ENCODE measurements at regions of chr3 and their contacts with region 1.

Region 1: DNA sequence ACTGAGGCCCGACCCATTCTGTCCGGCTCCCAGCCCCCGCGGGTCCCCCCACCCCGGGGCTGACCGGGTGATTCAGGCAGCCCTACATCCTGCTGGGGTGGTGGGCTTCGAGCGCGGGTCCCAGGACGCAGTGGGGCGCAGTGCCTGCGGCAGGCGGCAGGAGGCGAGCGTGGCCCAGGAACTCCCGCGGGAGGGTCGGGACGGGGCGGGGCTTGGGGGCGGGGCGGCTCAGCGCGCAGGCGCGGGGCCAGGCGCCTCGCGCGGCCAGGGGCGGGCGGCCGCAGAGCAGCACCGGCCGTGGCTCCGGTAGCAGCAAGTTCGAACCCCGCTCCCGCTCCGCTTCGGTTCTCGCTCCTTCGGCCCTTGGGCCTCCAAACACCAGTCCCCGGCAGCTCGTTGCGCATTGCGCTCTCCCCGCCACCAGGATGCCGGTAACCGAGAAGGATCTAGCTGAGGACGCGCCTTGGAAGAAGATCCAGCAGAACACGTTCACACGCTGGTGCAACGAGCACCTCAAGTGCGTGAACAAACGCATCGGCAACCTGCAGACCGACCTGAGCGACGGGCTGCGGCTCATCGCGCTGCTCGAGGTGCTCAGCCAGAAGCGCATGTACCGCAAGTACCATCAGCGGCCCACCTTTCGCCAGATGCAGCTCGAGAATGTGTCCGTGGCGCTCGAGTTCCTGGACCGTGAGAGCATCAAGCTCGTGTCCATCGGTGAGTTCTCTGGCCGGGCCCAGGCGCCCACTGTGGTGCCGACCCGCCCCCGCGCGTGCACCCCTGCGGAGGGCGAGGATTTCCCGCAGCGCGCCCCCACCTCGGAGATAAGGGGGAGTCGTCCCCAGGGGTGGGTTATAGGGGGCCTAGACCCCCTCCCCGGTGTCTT is at the start of gene FLNB:
- DNase-seq: peak; percentile 73
- H3K4me3 Mint-ChIP-seq: peak within 1 kb of the TSS; percentile 80
- H3K27ac Mint-ChIP-seq: peak within 1 kb of the TSS; percentile 78
- H3K4me1 Mint-ChIP-seq: peaks cover 36% of the 10 kb centered on the region
- H3K27me3 Mint-ChIP-seq: no peaks in the 10 kb centered on the region
- total RNA-seq, gene FLNB: 34.8 and 35.6 TPM in 2 replicates

Region 2: GRCh38 chr3:57983734-57984518 is 24.5 kb before region 1 on chr3:
- intact Hi-C with region 1: loop called (anchors 2 kb)
- DNase-seq: peak; percentile 64
- H3K4me3 Mint-ChIP-seq: peak overlapping the region; percentile 10
- H3K27ac Mint-ChIP-seq: peak overlapping the region; percentile 91
- H3K4me1 Mint-ChIP-seq: peaks cover 19% of the 10 kb centered on the region
- H3K27me3 Mint-ChIP-seq: no peaks in the 10 kb centered on the region

Region 3: GRCh38 chr3:58034738-58035523 is 26.5 kb after region 1 on chr3:
- intact Hi-C with region 1: loop called (anchors 2 kb)
- DNase-seq: peak; percentile 46
- H3K4me3 Mint-ChIP-seq: peak overlapping the region; percentile 51
- H3K27ac Mint-ChIP-seq: peak overlapping the region; percentile 84
- H3K4me1 Mint-ChIP-seq: peaks cover 42% of the 10 kb centered on the region
- H3K27me3 Mint-ChIP-seq: no peaks in the 10 kb centered on the region

Region 4: GRCh38 chr3:58052373-58053273 is 44.2 kb after region 1 on chr3:
- intact Hi-C with region 1: loop called (anchors 5 kb)
- DNase-seq: no peak
- H3K4me3 Mint-ChIP-seq: no peak overlapping the region
- H3K27ac Mint-ChIP-seq: peak overlapping the region; percentile 16
- H3K4me1 Mint-ChIP-seq: peaks cover 18% of the 10 kb centered on the region
- H3K27me3 Mint-ChIP-seq: no peaks in the 10 kb centered on the region

Region 5: DNA sequence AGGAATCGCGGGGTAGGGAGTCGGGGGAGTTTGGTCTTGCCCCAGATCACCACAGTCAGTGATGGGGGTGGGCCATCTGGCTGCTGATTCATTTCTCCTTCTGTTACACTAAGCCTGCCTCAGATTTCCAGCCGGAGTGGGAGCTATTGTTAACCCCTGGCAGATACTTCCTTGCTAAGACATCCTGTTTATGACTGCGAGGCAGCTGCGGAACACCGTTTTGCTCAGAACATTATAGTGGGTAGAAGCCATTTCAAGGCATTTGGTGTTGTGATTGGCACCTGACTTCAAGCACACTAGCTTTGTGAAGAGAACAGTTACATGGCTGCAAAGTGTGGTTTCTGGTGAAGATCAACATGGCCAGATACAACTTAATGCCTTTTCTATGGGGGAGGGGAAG is 73.7 kb after region 1 on chr3:
- intact Hi-C with region 1: loop called (anchors 5 kb)
- DNase-seq: peak; percentile 14
- H3K4me3 Mint-ChIP-seq: peak overlapping the region; percentile 50
- H3K27ac Mint-ChIP-seq: peak overlapping the region; percentile 75
- H3K4me1 Mint-ChIP-seq: peaks cover 39% of the 10 kb centered on the region
- H3K27me3 Mint-ChIP-seq: no peaks in the 10 kb centered on the region

Region 6: GRCh38 chr3:58116161-58116955 is 108.0 kb after region 1 on chr3:
- intact Hi-C with region 1: loop called (anchors 5 kb)
- DNase-seq: peak; percentile 35
- H3K4me3 Mint-ChIP-seq: no peak overlapping the region
- H3K27ac Mint-ChIP-seq: peak overlapping the region; percentile 65
- H3K4me1 Mint-ChIP-seq: peaks cover 20% of the 10 kb centered on the region
- H3K27me3 Mint-ChIP-seq: no peaks in the 10 kb centered on the region

Region 7: DNA sequence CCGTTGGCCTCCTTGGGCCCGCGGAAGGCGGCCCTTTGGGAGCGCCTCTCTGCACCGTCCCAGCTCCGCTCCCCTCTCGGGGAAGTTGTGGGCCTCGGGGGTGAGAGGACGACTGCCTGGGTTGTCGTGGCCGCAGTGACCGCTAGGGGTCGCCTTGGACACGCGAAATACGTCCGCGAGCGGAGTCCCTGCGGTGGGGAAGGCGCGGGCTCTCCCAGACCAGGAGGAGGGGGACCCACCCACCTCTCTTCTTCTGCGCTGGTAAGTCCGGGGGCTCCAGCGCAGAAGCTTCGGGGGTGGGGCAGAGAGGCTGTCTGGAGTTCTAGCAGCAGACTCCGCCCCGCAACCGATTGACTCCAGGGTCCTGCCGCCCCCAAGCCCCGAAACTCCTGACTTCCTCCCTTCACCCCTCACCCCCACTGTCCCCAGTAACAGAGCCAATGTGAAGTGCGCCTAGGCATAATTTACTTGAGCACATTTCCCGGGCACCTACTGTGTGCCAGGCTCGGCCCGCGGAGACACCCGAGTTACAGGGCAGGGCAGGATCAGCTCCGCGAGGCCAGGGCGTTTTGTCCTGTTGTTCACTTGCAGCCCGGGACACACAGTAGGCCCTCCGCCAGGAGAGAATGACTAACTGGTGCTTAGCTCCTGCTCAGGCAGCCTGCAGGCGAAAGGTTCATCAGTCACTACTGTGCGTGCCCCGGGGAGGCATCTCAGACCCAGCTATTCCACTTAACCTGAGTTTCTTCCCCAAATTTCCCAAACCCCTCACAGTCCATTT is 169.6 kb after region 1 on chr3:
- intact Hi-C with region 1: loop called (anchors 1 kb)
- DNase-seq: peak; percentile 80
- H3K4me3 Mint-ChIP-seq: peak overlapping the region; percentile 74
- H3K27ac Mint-ChIP-seq: no peak overlapping the region
- H3K4me1 Mint-ChIP-seq: peaks cover 18% of the 10 kb centered on the region
- H3K27me3 Mint-ChIP-seq: peaks cover 2% of the 10 kb centered on the region